Ascending aorta (tissue), 2 donors: ENCODE measurements at regions of chr20 and their contacts with region 1.

Region 1: GRCh38 chr20:49594143-49594930 is 26.4 kb upstream of the PTGIS start:
- DNase-seq: peak in 1 of 2 donors; percentile 87
- H3K4me3 ChIP-seq: no peak overlapping the region
- H3K27ac ChIP-seq: peak overlapping the region; percentile 97 to 100
- H3K4me1 ChIP-seq: peaks cover 10 to 46% of the 10 kb centered on the region in 2 donors
- H3K27me3 ChIP-seq: no peaks in the 10 kb centered on the region
- CTCF ChIP-seq: no peak

Region 2: GRCh38 chr20:49529470-49529869 is 64.9 kb before region 1 on chr20:
- intact Hi-C with region 1: no loop called
- DNase-seq: no peak
- H3K4me3 ChIP-seq: no peak overlapping the region
- H3K27ac ChIP-seq: peak overlapping the region; percentile 27 to 54
- H3K4me1 ChIP-seq: peaks cover 0 to 21% of the 10 kb centered on the region in 2 donors
- H3K27me3 ChIP-seq: no peaks in the 10 kb centered on the region
- CTCF ChIP-seq: no peak

Region 3: GRCh38 chr20:49559401-49560081 is 34.8 kb before region 1 on chr20:
- intact Hi-C with region 1: loop called (anchors 5 kb)
- DNase-seq: peak in 1 of 2 donors; percentile 80
- H3K4me3 ChIP-seq: peak overlapping the region in 1 of 2 donors; percentile 40
- H3K27ac ChIP-seq: peak overlapping the region; percentile 97 to 100
- H3K4me1 ChIP-seq: peaks cover 29 to 84% of the 10 kb centered on the region in 2 donors
- H3K27me3 ChIP-seq: no peaks in the 10 kb centered on the region
- CTCF ChIP-seq: no peak